Ovary (tissue), 10 donors: ENCODE measurements at regions of chr16 and their contacts with region 1.

Region 1: DNA sequence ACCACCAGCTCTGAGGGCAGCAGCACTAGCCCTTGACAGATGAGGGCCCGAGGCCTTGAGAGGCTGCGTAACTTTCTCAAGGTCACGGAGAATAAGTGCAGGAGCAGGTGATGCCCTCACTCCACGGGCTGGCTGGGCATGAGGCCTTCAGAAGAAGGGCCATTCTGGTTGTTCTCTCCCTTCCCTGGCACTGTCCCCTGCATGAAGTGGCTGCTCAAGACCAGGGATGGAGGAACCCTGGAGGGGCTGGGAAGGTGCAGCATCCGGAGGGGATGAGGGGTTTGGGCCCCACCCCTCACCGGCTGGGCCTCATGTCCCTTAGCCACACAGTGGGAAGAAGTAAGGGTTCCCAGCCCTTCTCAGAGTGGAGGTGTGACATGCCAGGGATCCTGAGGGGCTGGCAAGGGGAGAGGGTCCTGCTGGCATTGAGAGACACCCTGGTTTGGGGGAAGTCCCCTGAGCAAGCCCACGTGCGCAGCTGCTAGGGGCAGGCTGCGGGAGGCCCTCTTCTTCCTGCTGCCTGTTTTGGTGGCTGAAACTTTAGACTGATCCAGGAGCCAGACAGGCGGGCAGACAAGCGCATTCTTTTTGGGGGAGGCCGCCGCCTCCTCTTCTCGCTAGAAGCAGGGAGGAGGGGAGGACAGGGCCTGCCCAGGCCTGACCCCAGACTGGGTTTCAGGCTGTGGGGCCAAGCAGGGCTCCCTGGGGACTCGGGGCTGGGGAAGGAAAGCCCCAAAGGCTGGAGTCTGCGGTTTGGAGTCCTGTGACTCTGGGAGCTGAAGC is 74.0 kb downstream of the N4BP1 start:
- DNase-seq: peak; percentile 46 to 76 (median 65)
- H3K4me3 ChIP-seq: no peak overlapping the region
- H3K27ac ChIP-seq: peak overlapping the region; percentile 58 to 72
- H3K4me1 ChIP-seq: peaks cover 21% of the 10 kb centered on the region
- H3K27me3 ChIP-seq: no peaks in the 10 kb centered on the region
- CTCF ChIP-seq: no peak
- EP300 ChIP-seq: no peak
- POLR2A ChIP-seq: no peak

Region 2: GRCh38 chr16:48365581-48366164 is 170.3 kb before region 1 on chr16:
- intact Hi-C with region 1: loop called in 1 of 4 experiments (anchors 10 kb)
- DNase-seq: peak; percentile 80 to 89 (median 85)
- H3K4me3 ChIP-seq: peak overlapping the region; percentile 51
- H3K27ac ChIP-seq: peak overlapping the region; percentile 6 to 46
- H3K4me1 ChIP-seq: peaks cover 17% of the 10 kb centered on the region
- H3K27me3 ChIP-seq: no peaks in the 10 kb centered on the region
- CTCF ChIP-seq: no peak
- EP300 ChIP-seq: no peak
- POLR2A ChIP-seq: peak; percentile 32

Region 3: GRCh38 chr16:48385272-48386150 is 150.5 kb before region 1 on chr16 and contains the start of gene SIAH1:
- intact Hi-C with region 1: loop called in 1 of 4 experiments (anchors 10 kb)
- DNase-seq: peak; percentile 82 to 94 (median 88)
- H3K4me3 ChIP-seq: peak within 1 kb of the TSS; percentile 88
- H3K27ac ChIP-seq: peak within 1 kb of the TSS; percentile 99 to 100
- H3K4me1 ChIP-seq: peaks cover 12% of the 10 kb centered on the region
- H3K27me3 ChIP-seq: no peaks in the 10 kb centered on the region
- CTCF ChIP-seq: peak in 2 of 3 donors; percentile 1 to 20
- EP300 ChIP-seq: no peak
- POLR2A ChIP-seq: peak; percentile 78
- total RNA-seq, gene SIAH1: 24.3 to 36.4 (median 28.6) TPM

Region 4: GRCh38 chr16:48452977-48453760 is 82.9 kb before region 1 on chr16:
- intact Hi-C with region 1: loop called in 1 of 4 experiments (anchors 2 kb)
- DNase-seq: no peak
- H3K4me3 ChIP-seq: no peak overlapping the region
- H3K27ac ChIP-seq: no peak overlapping the region
- H3K4me1 ChIP-seq: no peaks in the 10 kb centered on the region
- H3K27me3 ChIP-seq: no peaks in the 10 kb centered on the region
- CTCF ChIP-seq: no peak
- EP300 ChIP-seq: no peak
- POLR2A ChIP-seq: no peak

Region 5: DNA sequence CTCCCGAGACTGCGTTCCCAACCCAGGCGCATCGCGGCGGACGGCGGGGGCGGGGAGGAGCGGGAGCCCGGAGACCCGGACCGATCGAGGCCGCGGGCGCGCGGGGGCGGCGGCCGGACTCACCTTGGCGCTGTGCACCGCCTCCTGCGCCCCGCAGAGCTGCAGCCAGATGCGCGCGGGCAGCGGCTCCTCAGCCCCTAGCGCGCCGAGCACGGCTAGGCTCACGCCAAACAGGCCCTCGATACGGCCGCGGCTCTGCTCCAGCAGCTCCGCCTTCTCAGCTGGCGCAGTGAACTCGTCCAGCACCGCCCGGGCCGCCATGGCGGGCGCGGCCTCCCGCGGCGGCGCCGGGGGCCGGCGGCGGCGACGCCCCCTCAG is 73.6 kb after region 1 on chr16:
- intact Hi-C with region 1: loop called in 1 of 4 experiments (anchors 10 kb)
- DNase-seq: peak in 3 of 5 donors; percentile 66 to 85 (median 79)
- H3K4me3 ChIP-seq: peak overlapping the region; percentile 66
- H3K27ac ChIP-seq: peak overlapping the region; percentile 88 to 91
- H3K4me1 ChIP-seq: peaks cover 18% of the 10 kb centered on the region
- H3K27me3 ChIP-seq: no peaks in the 10 kb centered on the region
- CTCF ChIP-seq: no peak
- EP300 ChIP-seq: no peak
- POLR2A ChIP-seq: no peak